GM12878 (cell line): ENCODE measurements at regions of chr10 and their contacts with region 1.

Region 1: GRCh38 chr10:119494236-119495060 is 48.1 kb downstream of the RGS10 start:
- DNase-seq: no peak
- ATAC-seq: no peak
- H3K4me3 ChIP-seq: no peak overlapping the region
- H3K27ac ChIP-seq: no peak overlapping the region
- H3K4me1 ChIP-seq: peaks cover 15% of the 10 kb centered on the region
- H3K27me3 ChIP-seq: no peaks in the 10 kb centered on the region
- CTCF ChIP-seq: no peak
- EP300 ChIP-seq: no peak
- POLR2A ChIP-seq: no peak
- RAD21 ChIP-seq: no peak

Region 2: DNA sequence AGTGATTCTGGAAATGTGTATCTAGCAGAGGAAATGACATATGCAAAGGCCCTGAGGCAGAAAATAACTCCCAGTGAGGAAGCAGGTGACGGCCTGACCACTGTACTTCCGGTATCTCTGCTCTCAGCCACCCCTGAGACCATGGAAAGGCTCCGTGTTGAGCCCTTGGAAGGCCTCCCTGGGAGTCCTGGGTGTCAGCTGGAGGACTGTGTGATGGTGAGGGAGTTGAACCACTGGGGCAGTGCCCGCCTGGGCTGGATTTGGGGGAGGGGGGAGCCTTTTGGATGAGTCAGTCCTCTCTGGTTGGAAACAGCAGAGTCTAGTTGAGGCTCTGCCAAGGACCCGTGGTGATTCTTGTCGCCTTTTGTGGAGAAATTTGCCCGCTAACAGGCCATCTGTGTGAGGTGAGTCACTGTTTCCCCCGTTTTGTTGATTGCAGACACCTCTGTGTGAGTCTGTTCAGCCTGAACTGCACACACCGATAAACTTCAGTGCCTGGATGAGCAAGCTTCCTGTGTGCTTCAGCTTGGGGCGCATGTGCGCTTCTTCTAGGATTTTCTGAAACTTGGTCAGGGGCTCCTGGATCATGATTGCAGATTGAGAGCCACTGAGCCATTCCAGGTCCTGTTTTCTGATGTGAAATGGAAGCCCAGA is 188.5 kb before region 1 on chr10:
- CTCF ChIA-PET with region 1: interaction called, 4 read pairs
- POLR2A ChIA-PET with region 1: no interaction called
- RAD21 ChIA-PET with region 1: no interaction called
- SMC1A ChIA-PET with region 1: interaction called, 3 read pairs
- in situ Hi-C with region 1: no loop called
- intact Hi-C with region 1: loop called (anchors 2 kb)
- DNase-seq: peak; percentile 81
- ATAC-seq: peak; percentile 85
- H3K4me3 ChIP-seq: peak overlapping the region; percentile 69
- H3K27ac ChIP-seq: peak overlapping the region; percentile 92
- H3K4me1 ChIP-seq: peaks cover 78% of the 10 kb centered on the region
- H3K27me3 ChIP-seq: no peaks in the 10 kb centered on the region
- CTCF ChIP-seq: no peak
- EP300 ChIP-seq: peak; percentile 22 to 29; a peak in 1 of 4 replicates
- POLR2A ChIP-seq: peak; percentile 65
- RAD21 ChIP-seq: 0 out of 2 replicates have a peak, but pooled peaks have one; percentile 5

Region 3: GRCh38 chr10:119395280-119395989 is 99.0 kb before region 1 on chr10:
- CTCF ChIA-PET with region 1: no interaction called
- POLR2A ChIA-PET with region 1: no interaction called
- RAD21 ChIA-PET with region 1: no interaction called
- SMC1A ChIA-PET with region 1: no interaction called
- in situ Hi-C with region 1: no loop called
- intact Hi-C with region 1: no loop called
- DNase-seq: no peak
- ATAC-seq: peak; percentile 72
- H3K4me3 ChIP-seq: no peak overlapping the region
- H3K27ac ChIP-seq: 0 out of 2 replicates have a peak overlapping the region, but pooled peaks have one; percentile 35
- H3K4me1 ChIP-seq: peaks cover 23% of the 10 kb centered on the region
- H3K27me3 ChIP-seq: no peaks in the 10 kb centered on the region
- CTCF ChIP-seq: no peak
- EP300 ChIP-seq: no peak
- POLR2A ChIP-seq: no peak
- RAD21 ChIP-seq: no peak

Region 4: DNA sequence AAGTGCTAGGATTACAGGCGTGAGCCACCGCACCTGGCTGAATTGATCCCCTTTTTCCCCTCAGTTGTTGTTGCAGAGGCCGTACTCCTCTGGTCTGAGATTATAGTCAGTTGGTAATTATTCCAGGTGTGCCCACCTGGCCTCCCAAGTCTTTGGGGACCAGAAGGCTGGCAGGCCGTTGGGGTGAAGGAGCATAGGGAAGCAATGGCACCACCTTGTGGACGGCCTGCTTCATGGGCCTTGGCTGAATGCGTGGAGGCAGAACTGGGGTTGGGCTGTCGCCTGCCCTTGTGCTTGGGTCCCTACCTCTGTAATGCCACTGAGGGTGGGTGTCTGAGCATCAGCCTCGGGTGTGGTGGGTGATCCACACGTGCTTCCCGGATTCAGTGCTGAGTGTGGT is 77.6 kb before region 1 on chr10:
- CTCF ChIA-PET with region 1: interaction called, 14 read pairs
- POLR2A ChIA-PET with region 1: no interaction called
- RAD21 ChIA-PET with region 1: interaction called, 4 read pairs
- SMC1A ChIA-PET with region 1: interaction called, 5 read pairs
- in situ Hi-C with region 1: no loop called
- intact Hi-C with region 1: no loop called
- DNase-seq: peak; percentile 15
- ATAC-seq: peak; percentile 97
- H3K4me3 ChIP-seq: no peak overlapping the region
- H3K27ac ChIP-seq: no peak overlapping the region
- H3K4me1 ChIP-seq: no peaks in the 10 kb centered on the region
- H3K27me3 ChIP-seq: no peaks in the 10 kb centered on the region
- CTCF ChIP-seq: peak; percentile 84 to 90 (median 85)
- EP300 ChIP-seq: no peak
- POLR2A ChIP-seq: no peak
- RAD21 ChIP-seq: peak; percentile 93

Region 5: DNA sequence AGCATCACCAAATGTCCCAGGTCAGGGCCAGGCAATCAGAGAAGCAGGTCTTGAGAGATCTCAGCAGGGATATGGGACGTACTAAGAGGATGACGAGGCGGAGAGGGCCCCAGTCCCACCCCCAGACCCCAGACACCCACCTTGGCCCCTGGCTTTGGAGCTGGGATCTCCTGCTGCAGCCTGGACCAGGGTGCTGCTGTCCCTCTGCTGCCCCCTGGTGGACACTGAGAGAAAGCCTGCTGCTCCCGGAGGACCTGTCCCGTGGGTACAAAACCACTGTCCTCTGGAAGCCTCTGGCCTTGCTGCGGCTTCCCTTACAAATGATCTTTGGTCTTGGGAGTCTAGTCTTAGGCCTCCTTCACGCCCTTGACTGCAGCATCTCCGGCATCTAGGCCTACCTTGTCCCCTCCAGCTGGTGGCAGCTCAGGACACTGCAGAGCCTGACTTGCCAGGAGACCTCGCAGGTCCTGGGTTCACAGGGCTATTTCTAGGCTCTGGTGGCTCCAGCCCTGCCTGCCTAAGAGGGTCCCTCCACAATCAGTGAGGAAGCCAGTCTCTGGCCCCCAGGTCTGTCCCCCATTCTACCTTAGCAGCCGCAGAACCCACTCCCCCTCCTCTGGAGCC is 49.0 kb before region 1 on chr10:
- CTCF ChIA-PET with region 1: interaction called, 24 read pairs
- POLR2A ChIA-PET with region 1: no interaction called
- RAD21 ChIA-PET with region 1: interaction called, 12 read pairs
- SMC1A ChIA-PET with region 1: interaction called, 9 read pairs
- in situ Hi-C with region 1: no loop called
- intact Hi-C with region 1: loop called (anchors 1 kb)
- DNase-seq: no peak
- ATAC-seq: peak; percentile 89
- H3K4me3 ChIP-seq: no peak overlapping the region
- H3K27ac ChIP-seq: no peak overlapping the region
- H3K4me1 ChIP-seq: peaks cover 14% of the 10 kb centered on the region
- H3K27me3 ChIP-seq: no peaks in the 10 kb centered on the region
- CTCF ChIP-seq: peak; percentile 86 to 92 (median 89)
- EP300 ChIP-seq: no peak
- POLR2A ChIP-seq: no peak
- RAD21 ChIP-seq: peak; percentile 78

Region 6: DNA sequence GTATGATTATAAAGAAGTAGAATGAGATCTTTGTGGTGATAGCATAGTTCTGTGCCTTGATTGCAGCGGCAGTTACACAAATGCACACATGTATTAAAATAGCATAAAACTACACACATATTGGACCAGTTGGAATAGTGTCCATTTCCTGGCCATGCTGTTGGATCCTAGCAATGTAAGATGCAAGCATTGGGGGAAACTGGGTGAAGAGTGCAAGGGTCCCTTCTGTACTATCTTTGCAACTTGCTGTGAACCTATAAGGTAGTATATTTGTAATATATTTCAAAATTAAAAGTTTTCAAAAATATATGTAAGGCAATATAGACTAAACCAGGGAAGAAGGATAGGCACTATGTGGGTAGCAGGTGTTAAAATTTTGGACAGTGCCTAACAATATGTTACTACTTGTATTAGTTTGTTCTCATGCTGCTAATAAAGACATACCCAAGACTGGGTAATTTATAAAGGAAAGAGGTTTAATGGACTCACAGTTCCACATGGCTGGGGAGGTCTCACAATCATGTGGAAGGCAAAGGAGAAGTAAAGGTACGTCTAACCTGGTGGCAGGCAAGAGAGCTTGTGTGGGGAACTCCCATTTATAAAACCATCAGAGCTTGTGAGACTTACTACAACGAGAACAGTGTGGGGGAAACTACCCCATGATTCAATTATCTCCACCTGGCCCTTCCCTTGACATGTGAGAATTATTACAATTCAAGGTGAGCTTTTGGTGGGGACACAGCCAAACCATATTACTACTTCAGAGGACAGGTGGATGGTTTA is 23.3 kb before region 1 on chr10:
- CTCF ChIA-PET with region 1: interaction called, 11 read pairs
- POLR2A ChIA-PET with region 1: no interaction called
- RAD21 ChIA-PET with region 1: no interaction called
- SMC1A ChIA-PET with region 1: interaction called, 3 read pairs
- in situ Hi-C with region 1: no loop called
- intact Hi-C with region 1: no loop called
- DNase-seq: no peak
- ATAC-seq: peak; percentile 44
- H3K4me3 ChIP-seq: no peak overlapping the region
- H3K27ac ChIP-seq: no peak overlapping the region
- H3K4me1 ChIP-seq: peaks cover 4% of the 10 kb centered on the region; the same call in 1 of the 2 replicates
- H3K27me3 ChIP-seq: no peaks in the 10 kb centered on the region
- CTCF ChIP-seq: no peak
- EP300 ChIP-seq: no peak
- POLR2A ChIP-seq: no peak
- RAD21 ChIP-seq: no peak

Region 7: DNA sequence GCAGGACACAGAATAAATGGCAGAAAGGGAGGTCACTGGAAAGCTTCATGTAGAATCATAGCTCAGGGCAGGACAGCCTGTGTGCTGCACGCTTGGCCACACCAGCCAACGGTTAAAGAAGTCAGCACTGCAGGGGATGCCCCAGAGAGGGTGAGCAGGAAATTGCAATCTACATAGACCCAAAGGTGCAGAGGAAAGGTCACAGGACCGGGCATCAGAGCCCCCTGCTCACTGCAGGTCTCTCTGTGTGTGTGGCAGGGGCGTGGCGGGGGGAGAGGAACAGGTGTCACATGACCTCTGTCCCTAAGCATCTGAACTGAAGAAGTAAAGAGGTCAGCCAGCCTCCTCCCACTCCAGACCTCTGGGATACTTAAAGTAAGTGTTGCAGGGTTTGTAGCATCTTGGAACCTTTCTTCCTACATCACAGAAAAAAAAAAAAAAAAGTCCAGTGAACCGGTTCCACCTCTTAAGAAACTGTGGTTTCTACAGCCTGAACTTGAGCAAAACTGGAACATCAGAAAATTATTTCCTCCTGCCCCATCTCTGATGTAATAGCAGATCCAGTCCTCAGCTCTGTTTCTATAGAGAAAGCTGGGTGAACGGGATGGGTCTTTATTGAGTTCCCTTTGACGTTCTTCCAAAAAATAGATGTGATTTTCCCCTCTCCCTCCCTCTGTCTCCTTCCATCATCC is 16.2 kb before region 1 on chr10:
- CTCF ChIA-PET with region 1: interaction called, 23 read pairs
- POLR2A ChIA-PET with region 1: interaction called, 8 read pairs
- RAD21 ChIA-PET with region 1: interaction called, 10 read pairs
- SMC1A ChIA-PET with region 1: interaction called, 9 read pairs
- in situ Hi-C with region 1: no loop called
- intact Hi-C with region 1: no loop called
- DNase-seq: peak; percentile 46
- ATAC-seq: peak; percentile 98
- H3K4me3 ChIP-seq: peak overlapping the region; percentile 35; the same call in 1 of the 2 replicates
- H3K27ac ChIP-seq: peak overlapping the region; percentile 30; the same call in 1 of the 2 replicates
- H3K4me1 ChIP-seq: peaks cover 25% of the 10 kb centered on the region
- H3K27me3 ChIP-seq: no peaks in the 10 kb centered on the region
- CTCF ChIP-seq: no peak
- EP300 ChIP-seq: peak in 1 of 2 experiments; percentile 27; a peak in 1 of 4 replicates
- POLR2A ChIP-seq: no peak
- RAD21 ChIP-seq: no peak